Left cardiac atrium (tissue), 4 donors: ENCODE measurements at regions of chr12 and their contacts with region 1.

Region 1: DNA sequence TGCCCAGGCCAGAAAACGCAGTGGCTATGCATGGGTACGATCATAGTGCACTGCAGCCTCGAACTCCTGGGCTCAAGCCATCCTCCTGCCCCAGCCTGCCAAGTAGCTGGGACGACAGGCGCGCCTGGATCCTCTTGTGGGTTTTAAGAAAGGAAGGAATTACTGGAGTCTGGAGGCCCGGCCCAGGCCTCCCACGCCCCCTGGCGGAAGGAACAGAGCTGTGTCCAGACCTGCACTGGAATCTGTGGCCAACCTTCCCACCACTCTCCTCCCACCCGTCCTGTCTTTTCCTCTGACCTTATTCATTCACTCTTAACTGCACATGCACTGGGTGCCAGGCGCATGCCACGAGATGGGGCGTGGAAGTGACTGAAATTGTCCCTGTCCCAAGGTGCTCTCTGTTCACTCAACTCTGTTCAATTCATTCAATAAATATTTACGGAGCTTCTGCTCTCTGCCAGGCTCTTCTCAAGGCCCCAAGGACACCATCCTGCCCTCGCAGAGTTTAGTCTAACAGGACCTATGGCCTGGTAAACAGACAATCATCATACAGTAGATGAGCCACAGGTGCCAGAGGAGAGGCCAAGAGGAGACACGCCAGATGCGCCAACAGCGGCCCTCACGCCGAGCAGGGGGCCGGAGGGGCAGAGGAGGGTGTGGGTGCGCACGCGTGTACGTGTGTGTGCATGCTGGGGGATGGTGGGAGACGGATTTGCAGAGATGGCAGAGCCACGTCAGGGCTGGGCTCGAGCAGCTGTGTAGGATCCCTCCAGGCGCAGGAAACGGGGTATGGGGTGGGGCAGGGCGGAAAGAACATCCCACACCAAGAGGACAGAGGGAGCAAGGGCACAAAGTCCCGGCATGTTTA is 13.7 kb upstream of the TMEM106C start:
- DNase-seq: peak; percentile 87
- ATAC-seq: peak; percentile 86 to 93

Region 2: DNA sequence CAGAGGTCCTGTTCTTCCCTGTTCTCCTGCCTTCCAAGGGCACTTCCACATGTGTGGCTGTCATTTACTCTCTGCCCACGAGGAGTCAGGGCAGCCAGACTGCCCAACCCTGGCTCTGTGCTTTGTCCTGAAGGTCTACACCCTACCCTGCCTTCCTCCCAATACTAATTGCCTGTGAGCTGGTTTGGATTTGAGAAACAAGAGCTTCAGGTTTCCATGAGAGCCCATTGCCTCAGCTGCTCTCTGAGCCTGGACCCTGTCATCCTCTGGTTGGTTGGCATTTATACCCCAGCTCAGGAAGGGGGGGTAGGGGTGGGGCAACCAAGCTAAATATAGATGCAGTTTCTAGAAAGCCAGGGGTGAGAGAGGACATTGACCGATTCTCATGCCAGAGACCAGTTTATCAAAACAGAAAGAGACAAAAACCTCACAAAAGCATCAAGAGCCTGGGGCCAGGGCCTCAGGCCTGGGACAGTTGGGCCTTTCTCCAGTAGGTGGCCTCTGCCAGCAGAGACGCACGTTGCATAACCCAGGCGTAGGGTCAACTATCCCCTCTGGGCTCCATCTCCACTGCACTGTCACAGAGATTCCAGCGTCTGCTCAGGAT is 79.4 kb before region 1 on chr12:
- intact Hi-C with region 1: loop called in 1 of 2 experiments (anchors 2 kb)
- DNase-seq: peak; percentile 48
- ATAC-seq: peak; percentile 74 to 87

Region 3: GRCh38 chr12:47904713-47905310 is 44.9 kb before region 1 on chr12 and contains the start of gene VDR:
- intact Hi-C with region 1: loop called in 1 of 2 experiments (anchors 1 kb)
- DNase-seq: peak; percentile 77
- ATAC-seq: peak; percentile 87 to 92
- total RNA-seq, gene VDR: 0.74 to 3.1 TPM

Region 4: GRCh38 chr12:48037267-48037915 is 87.7 kb after region 1 on chr12:
- intact Hi-C with region 1: no loop called
- DNase-seq: no peak
- ATAC-seq: peak in 1 of 2 donors; percentile 41